ENCODE measurements at regions of chr16 and their contacts with region 1.

Region 1: DNA sequence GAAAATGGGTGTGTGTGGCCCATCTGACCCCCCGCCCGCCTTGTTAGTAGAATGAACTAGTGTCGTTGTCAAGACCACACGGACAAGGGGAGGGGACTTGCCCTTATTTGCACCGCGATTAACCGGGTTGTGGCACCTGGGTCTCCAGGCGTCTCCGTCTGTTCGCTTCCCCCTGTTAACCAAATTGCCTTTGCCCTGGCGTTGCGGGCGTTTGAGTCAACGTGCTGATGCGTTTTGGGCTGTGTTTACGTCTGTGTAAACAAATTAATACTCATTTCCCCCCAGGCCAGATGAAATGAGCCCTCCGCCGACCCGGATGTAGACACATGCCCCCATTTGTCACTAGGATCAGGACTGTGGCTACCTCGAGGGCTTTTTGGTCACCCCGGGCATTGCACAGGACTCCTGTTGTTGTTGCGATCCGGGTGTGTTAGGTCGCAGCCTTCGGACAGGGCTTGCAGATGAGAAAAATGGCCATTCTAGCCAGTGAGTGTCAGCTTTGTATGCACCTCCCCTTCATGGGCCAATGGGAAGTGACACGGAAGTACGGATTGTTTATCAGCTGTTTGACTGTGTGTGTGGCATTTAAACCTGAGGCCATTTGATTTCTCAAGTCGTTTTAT is 906 bp downstream of the RBL2 start:
- DNase-seq: peak; percentile 73
- ATAC-seq: peak; percentile 87
- H3K4me3 ChIP-seq: peak overlapping the region; percentile 74
- H3K27ac ChIP-seq: peak overlapping the region; percentile 62
- H3K4me1 ChIP-seq: peaks cover 14% of the 10 kb centered on the region
- H3K27me3 ChIP-seq: no peaks in the 10 kb centered on the region
- CTCF ChIP-seq: no peak

Region 2: GRCh38 chr16:53503270-53503923 is 68.2 kb after region 1 on chr16:
- CTCF ChIA-PET with region 1: no interaction called
- POLR2A ChIA-PET with region 1: no interaction called
- intact Hi-C with region 1: loop called (anchors 5 kb)
- DNase-seq: peak; percentile 98
- ATAC-seq: peak; percentile 88
- H3K4me3 ChIP-seq: peak overlapping the region; percentile 75
- H3K27ac ChIP-seq: peak overlapping the region; percentile 30; the same call in 1 of the 2 replicates
- H3K4me1 ChIP-seq: peaks cover 22% of the 10 kb centered on the region
- H3K27me3 ChIP-seq: no peaks in the 10 kb centered on the region
- CTCF ChIP-seq: no peak

Measured in PC-3 (cell line).